Mammary epithelial cell (primary cell): ENCODE measurements at regions of chr4 and their contacts with region 1.

Region 1: GRCh38 chr4:174282836-174283506 is 496 bp downstream of the FBXO8 start:
- DNase-seq: peak; percentile 96
- H3K4me3 ChIP-seq: peak overlapping the region; percentile 78 to 94 (median 81)
- H3K27ac ChIP-seq: peak overlapping the region; percentile 96
- H3K4me1 ChIP-seq: peaks cover 3% of the 10 kb centered on the region
- H3K27me3 ChIP-seq: no peaks in the 10 kb centered on the region
- CTCF ChIP-seq: no peak

Region 2: GRCh38 chr4:173334085-173334772 is 948.7 kb before region 1 on chr4 and contains the start of gene HMGB2:
- CTCF ChIA-PET with region 1: no interaction called
- dilution Hi-C with region 1: no loop called
- in situ Hi-C with region 1: no loop called
- intact Hi-C with region 1: loop called (anchors 10 kb)
- DNase-seq: peak; percentile 100
- H3K4me3 ChIP-seq: peak within 1 kb of the TSS; percentile 98 to 99 (median 98)
- H3K27ac ChIP-seq: peak within 1 kb of the TSS; percentile 98
- H3K4me1 ChIP-seq: peaks cover 9% of the 10 kb centered on the region
- H3K27me3 ChIP-seq: no peaks in the 10 kb centered on the region
- CTCF ChIP-seq: no peak
- total RNA-seq, gene HMGB2: 9.8 to 73.9 TPM

Region 3: DNA sequence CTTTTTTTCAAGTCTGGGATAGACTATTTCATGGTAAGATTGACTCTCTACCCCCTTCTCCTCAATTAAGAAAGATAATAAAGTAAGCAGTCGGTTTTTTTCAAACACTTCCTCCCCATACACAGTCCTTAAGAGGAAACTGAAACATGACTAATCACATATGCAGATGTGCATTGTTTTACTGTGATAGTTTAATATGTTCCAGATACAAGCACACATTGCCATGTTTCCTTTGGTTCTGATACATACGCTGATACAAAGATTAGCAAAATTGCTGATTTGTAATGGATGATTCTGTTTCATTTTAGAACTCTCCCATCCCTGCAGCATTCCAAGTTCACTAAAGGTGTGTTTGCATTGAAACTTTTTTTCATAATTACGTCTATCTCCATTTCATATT is 75.6 kb before region 1 on chr4:
- CTCF ChIA-PET with region 1: no interaction called
- dilution Hi-C with region 1: no loop called
- in situ Hi-C with region 1: no loop called
- intact Hi-C with region 1: no loop called
- DNase-seq: no peak
- H3K4me3 ChIP-seq: no peak overlapping the region
- H3K27ac ChIP-seq: no peak overlapping the region
- H3K4me1 ChIP-seq: no peaks in the 10 kb centered on the region
- H3K27me3 ChIP-seq: peaks cover 13% of the 10 kb centered on the region
- CTCF ChIP-seq: no peak

Region 4: GRCh38 chr4:174260099-174260498 is 22.9 kb before region 1 on chr4:
- CTCF ChIA-PET with region 1: no interaction called
- dilution Hi-C with region 1: no loop called
- in situ Hi-C with region 1: no loop called
- intact Hi-C with region 1: loop called (anchors 1 kb)
- DNase-seq: peak; percentile 65
- H3K4me3 ChIP-seq: no peak overlapping the region
- H3K27ac ChIP-seq: peak overlapping the region; percentile 16
- H3K4me1 ChIP-seq: no peaks in the 10 kb centered on the region
- H3K27me3 ChIP-seq: no peaks in the 10 kb centered on the region
- CTCF ChIP-seq: no peak